ENCODE measurements at regions of chr22 and their contacts with region 1.

Region 1: GRCh38 chr22:45064313-45065278 is 54.8 kb upstream of the PHF21B start:
- DNase-seq: no peak
- H3K4me3 ChIP-seq: no peak overlapping the region
- CTCF ChIP-seq: no peak
- POLR2A ChIP-seq: no peak

Region 2: GRCh38 chr22:45019861-45020655 is 44.5 kb before region 1 on chr22:
- intact Hi-C with region 1: loop called (anchors 1 kb)
- DNase-seq: no peak
- H3K4me3 ChIP-seq: no peak overlapping the region
- CTCF ChIP-seq: no peak
- POLR2A ChIP-seq: no peak